H1 (cell line): ENCODE measurements at regions of chr1 and their contacts with region 1.

Region 1: DNA sequence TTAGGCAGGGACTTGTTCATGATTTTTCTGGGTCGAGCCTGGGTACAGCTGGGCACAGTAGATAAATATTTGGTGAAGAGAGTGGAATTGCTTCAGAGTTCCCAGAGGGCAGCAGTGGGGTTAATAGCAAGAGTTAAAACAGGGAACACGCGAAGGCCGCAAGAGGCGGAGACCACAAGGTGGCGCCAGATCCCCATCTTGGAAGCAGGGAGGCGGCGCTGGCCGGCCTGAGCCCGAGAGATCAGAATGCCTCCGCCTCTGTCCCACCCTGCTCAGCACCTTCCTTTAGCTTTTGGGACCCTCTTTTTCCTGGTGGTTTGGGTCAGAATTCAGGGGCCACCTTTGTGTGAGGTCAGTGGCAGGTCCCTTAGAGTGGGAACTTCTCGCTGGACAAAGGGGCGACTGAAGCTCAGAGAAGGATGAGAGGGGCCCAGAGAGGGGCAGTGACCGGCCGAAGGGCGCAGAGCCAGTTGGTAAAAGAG is 6.5 kb upstream of the PADI2 start:
- DNase-seq: peak; percentile 68 to 99
- H3K4me3 ChIP-seq: no peak overlapping the region
- H3K27ac ChIP-seq: no peak overlapping the region
- H3K4me1 ChIP-seq: peaks cover 0 to 8% (median 3%) of the 10 kb centered on the region in 4 experiments; a peak in 6 of 7 replicates
- H3K27me3 ChIP-seq: no peaks in the 10 kb centered on the region; a peak in 1 of 7 replicates
- CTCF ChIP-seq: peak; percentile 93 to 98 (median 93)
- EP300 ChIP-seq: no peak
- POLR2A ChIP-seq: no peak
- RAD21 ChIP-seq: peak; percentile 99

Region 2: GRCh38 chr1:16888860-16889816 is 236.7 kb before region 1 on chr1:
- CTCF ChIA-PET with region 1: no interaction called
- POLR2A ChIA-PET with region 1: no interaction called
- DNase-seq: peak; percentile 81 to 92
- H3K4me3 ChIP-seq: peak overlapping the region; percentile 73 to 85 (median 77)
- H3K27ac ChIP-seq: peak overlapping the region; percentile 44; the same call in 1 of the 2 replicates
- H3K4me1 ChIP-seq: no peaks in the 10 kb centered on the region
- H3K27me3 ChIP-seq: no peaks in the 10 kb centered on the region
- CTCF ChIP-seq: no peak
- EP300 ChIP-seq: no peak
- POLR2A ChIP-seq: peak in 1 of 2 experiments; percentile 30; a peak in 1 of 3 replicates
- RAD21 ChIP-seq: no peak

Region 3: DNA sequence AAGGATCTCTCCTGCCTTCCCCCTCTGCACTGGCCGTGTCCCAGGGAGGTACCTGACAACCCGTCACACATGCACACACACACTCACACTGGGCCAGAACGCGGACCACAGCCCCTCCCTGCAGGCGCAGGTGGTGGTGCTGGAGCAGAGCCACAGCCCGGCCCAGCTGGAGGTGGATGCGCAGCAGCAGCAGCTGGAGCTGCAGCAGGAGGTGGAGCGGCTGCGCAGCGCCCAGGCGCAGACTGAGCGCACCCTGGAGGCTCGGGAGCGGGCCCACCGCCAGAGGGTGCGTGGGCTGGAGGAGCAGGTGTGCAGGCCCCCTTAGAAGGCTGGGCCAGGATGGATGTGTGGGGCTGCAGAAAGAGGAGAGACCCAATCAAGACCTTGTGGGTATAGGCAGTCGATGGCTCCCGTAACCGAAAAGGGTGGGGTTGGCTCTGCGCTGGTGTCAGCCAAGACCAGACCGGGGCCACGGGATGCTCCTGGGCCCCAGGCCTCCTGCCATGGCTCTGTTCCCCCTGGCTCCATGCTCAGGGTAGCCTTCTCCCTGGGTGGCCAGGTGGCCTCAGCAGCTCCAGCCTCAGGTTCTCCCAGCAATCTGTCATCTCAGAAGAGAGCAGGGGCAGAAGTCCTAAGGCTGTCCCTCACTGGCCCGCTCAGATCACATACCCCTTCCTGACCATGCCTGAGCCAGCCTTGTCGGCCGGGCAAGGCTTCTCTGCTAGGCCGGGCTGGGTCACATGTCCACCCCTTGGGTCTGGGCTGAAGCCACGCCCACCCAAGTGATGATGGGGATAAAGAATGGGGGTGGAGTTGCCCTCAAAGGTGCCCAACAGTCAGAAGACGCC is 154.2 kb before region 1 on chr1:
- CTCF ChIA-PET with region 1: no interaction called
- POLR2A ChIA-PET with region 1: no interaction called
- DNase-seq: peak in 1 of 2 experiments; percentile 81
- H3K4me3 ChIP-seq: no peak overlapping the region
- H3K27ac ChIP-seq: 0 out of 2 replicates have a peak overlapping the region, but pooled peaks have one; percentile 11
- H3K4me1 ChIP-seq: peaks cover 0 to 11% (median 8%) of the 10 kb centered on the region in 4 experiments; a peak in 6 of 7 replicates
- H3K27me3 ChIP-seq: no peaks in the 10 kb centered on the region
- CTCF ChIP-seq: no peak
- EP300 ChIP-seq: no peak
- POLR2A ChIP-seq: no peak; a peak in 1 of 3 replicates
- RAD21 ChIP-seq: no peak

Region 4: GRCh38 chr1:17109892-17110554 is 15.8 kb before region 1 on chr1:
- CTCF ChIA-PET with region 1: interaction called, 13 read pairs
- POLR2A ChIA-PET with region 1: no interaction called
- DNase-seq: no peak
- H3K4me3 ChIP-seq: no peak overlapping the region
- H3K27ac ChIP-seq: no peak overlapping the region
- H3K4me1 ChIP-seq: peaks cover 0 to 4% (median 0%) of the 10 kb centered on the region in 4 experiments; a peak in 1 of 7 replicates
- H3K27me3 ChIP-seq: no peaks in the 10 kb centered on the region
- CTCF ChIP-seq: no peak
- EP300 ChIP-seq: no peak
- POLR2A ChIP-seq: no peak
- RAD21 ChIP-seq: no peak

Region 5: DNA sequence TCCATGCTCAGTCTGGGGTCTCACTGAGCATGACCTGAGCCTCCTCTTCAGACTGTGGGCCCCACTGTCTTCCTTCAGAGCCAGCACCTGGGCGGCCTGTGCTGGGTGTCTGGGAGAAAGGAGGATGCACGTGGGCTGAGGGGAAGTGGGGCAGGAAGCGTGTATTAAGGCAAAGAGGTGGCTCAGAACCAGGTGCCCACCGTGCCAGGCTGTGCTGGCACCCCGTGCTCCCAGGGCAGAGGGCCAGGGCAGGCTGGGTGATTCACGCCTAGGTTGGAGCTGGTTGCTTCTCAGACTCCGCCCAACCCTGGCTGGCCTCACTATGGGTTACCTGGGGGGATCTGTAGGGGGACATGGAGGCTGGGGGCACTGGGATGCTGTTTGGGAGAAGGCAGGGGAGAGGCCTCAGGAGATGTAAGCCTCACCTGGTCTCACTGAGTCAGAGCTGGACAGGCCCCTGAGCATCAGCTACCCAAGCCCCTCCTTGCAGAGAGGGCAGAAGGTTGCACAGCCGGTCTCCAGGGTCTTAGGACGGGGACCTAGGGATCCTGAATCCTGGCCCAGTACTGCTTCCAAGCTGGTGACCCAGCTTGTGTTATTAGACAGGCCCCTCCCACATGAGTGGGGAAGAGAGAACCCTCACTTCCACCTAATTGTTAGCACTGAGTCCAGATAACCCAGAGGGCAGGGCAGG is 60.6 kb after region 1 on chr1:
- CTCF ChIA-PET with region 1: interaction called, 14 read pairs
- POLR2A ChIA-PET with region 1: no interaction called
- DNase-seq: no peak
- H3K4me3 ChIP-seq: no peak overlapping the region
- H3K27ac ChIP-seq: no peak overlapping the region
- H3K4me1 ChIP-seq: peaks cover 0 to 6% (median 2%) of the 10 kb centered on the region in 4 experiments; a peak in 4 of 7 replicates
- H3K27me3 ChIP-seq: no peaks in the 10 kb centered on the region
- CTCF ChIP-seq: no peak
- EP300 ChIP-seq: no peak
- POLR2A ChIP-seq: no peak
- RAD21 ChIP-seq: no peak

Region 6: GRCh38 chr1:17236779-17237560 is 111.2 kb after region 1 on chr1:
- CTCF ChIA-PET with region 1: interaction called, 339 read pairs
- POLR2A ChIA-PET with region 1: interaction called, 3 read pairs
- DNase-seq: peak; percentile 79 to 98
- H3K4me3 ChIP-seq: no peak overlapping the region
- H3K27ac ChIP-seq: no peak overlapping the region
- H3K4me1 ChIP-seq: peaks cover 0 to 5% (median 0%) of the 10 kb centered on the region in 4 experiments; a peak in 4 of 7 replicates
- H3K27me3 ChIP-seq: no peaks in the 10 kb centered on the region; a peak in 1 of 7 replicates
- CTCF ChIP-seq: peak; percentile 88 to 97 (median 90)
- EP300 ChIP-seq: no peak
- POLR2A ChIP-seq: no peak
- RAD21 ChIP-seq: peak; percentile 97

Region 7: GRCh38 chr1:17274186-17275170 is 148.7 kb after region 1 on chr1:
- CTCF ChIA-PET with region 1: interaction called, 31 read pairs
- POLR2A ChIA-PET with region 1: no interaction called
- DNase-seq: peak; percentile 59 to 94
- H3K4me3 ChIP-seq: no peak overlapping the region
- H3K27ac ChIP-seq: no peak overlapping the region
- H3K4me1 ChIP-seq: no peaks in the 10 kb centered on the region; a peak in 1 of 7 replicates
- H3K27me3 ChIP-seq: no peaks in the 10 kb centered on the region
- CTCF ChIP-seq: peak; percentile 84 to 93 (median 92)
- EP300 ChIP-seq: no peak
- POLR2A ChIP-seq: no peak
- RAD21 ChIP-seq: peak; percentile 79 to 83

Region 8: DNA sequence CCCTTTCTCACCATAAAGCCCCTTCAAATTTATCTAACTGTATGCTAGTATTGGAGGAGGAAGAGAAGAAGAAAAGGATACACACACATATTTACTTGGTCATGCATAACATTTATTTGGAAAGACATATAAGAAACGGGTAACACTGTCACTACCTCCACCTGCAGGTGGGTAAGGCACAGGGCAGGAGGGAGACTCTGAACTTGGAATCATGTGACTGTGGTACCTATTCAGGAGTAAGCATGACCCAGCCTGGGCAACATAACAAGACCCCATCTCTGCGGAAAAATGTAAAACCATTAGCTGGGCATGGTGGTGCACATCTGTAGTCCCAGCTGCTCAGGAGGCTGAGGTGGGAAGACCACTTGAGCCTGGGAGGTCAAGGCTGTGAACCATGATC is 244.8 kb after region 1 on chr1:
- CTCF ChIA-PET with region 1: interaction called, 11 read pairs
- POLR2A ChIA-PET with region 1: no interaction called
- DNase-seq: no peak
- H3K4me3 ChIP-seq: no peak overlapping the region
- H3K27ac ChIP-seq: no peak overlapping the region
- H3K4me1 ChIP-seq: peaks cover 0 to 2% (median 0%) of the 10 kb centered on the region in 4 experiments; a peak in 1 of 7 replicates
- H3K27me3 ChIP-seq: no peaks in the 10 kb centered on the region; a peak in 1 of 7 replicates
- CTCF ChIP-seq: peak; percentile 53 to 78 (median 62)
- EP300 ChIP-seq: no peak
- POLR2A ChIP-seq: no peak
- RAD21 ChIP-seq: peak; percentile 53 to 64